ENCODE measurements at regions of chr22 and their contacts with region 1.

Region 1: GRCh38 chr22:35330258-35330861 is 30.7 kb downstream of the TOM1 start:
- H3K4me3 Mint-ChIP-seq: peak overlapping the region; percentile 63
- H3K27ac Mint-ChIP-seq: peak overlapping the region; percentile 97
- H3K4me1 Mint-ChIP-seq: peaks cover 77% of the 10 kb centered on the region
- H3K27me3 Mint-ChIP-seq: no peaks in the 10 kb centered on the region

Region 2: DNA sequence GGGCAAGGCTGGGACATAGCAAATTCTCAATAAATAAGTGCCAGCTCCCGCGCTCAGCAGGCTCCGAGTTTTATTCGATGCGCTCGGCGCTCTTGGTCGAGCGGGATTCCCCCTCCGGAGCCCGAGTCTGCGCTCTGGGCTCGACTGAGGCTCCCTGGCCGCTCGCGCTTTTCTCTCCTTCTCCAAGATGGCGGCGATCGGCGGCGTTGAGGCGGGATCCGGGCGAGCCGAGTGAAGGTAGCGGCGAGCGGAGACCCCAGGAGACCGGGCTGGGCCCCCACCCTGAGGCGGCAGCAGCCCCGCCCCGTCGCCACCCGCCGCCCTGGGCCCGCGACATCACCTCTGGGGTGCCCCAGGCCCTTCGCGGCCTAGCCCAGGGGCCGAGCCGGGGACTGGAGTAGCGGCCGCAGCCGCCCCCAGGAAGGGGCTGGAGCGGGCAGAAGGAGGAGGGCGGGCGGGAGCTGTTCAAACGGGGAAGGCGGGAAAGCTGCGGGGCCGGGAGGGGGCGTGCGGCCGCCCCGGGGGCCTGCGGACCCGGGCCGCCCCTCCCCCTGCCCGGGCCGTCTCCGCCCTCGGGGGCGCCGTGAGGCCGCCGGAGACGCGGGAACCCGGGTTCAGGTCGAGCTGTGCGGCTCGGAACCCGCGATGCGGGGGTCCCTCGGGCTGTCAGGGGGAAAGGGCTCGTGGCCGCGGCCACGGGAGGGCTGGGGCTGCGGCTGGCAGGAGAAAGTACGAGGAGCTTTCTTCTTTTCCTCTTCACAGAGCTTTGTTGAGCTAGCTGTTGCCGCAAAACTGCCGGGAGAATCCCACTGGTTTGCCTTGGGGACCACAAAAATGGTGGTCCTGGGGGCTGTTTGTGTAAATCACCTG is 72.8 kb before region 1 on chr22 and contains the start of gene HMGXB4:
- intact Hi-C with region 1: loop called (anchors 2 kb)
- H3K4me3 Mint-ChIP-seq: peak within 1 kb of the TSS; percentile 80
- H3K27ac Mint-ChIP-seq: peak within 1 kb of the TSS; percentile 76
- H3K4me1 Mint-ChIP-seq: peaks cover 27% of the 10 kb centered on the region
- H3K27me3 Mint-ChIP-seq: no peaks in the 10 kb centered on the region

Region 3: DNA sequence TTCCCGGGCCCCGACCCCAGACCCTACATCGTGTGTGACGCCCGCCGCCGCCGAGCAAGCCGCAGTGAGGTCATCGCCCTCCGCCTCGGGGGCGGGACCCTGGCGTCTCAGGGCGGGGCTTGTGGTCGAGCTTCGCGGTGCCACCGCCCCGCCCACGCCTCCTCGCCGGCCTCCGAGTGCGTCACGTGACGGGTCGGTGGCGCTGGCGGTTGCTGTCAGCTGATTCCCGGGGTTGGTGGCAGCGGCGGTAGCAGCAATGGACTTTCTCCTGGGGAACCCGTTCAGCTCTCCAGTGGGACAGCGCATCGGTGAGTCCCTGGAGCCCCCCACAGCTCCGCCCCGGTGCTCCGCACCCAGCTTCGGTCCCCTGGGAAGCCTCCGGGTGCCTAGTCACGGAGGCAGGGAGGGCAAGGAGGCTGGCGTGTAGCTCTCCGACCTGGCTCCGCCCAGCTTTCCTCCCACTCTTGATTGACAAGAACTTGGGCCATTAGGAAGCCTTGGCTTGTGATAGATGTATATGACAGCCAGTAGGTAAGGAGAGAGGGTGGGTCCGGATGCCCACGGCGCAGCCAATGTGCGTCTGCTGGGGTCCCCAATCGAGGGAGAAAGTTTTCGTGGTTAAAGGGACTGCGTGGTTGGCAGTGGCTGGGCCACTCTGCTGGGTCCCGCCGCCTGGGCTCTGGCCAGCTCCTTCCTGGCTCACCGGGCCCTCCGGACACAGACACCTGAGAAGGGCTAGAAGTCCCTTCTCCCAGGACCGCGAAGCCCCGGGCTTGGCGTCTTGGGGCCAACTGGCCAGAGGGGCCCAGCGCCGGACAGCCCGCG is 30.5 kb before region 1 on chr22 and contains the start of gene TOM1:
- intact Hi-C with region 1: loop called (anchors 2 kb)
- H3K4me3 Mint-ChIP-seq: peak within 1 kb of the TSS; percentile 93
- H3K27ac Mint-ChIP-seq: peak within 1 kb of the TSS; percentile 98
- H3K4me1 Mint-ChIP-seq: peaks cover 49% of the 10 kb centered on the region
- H3K27me3 Mint-ChIP-seq: no peaks in the 10 kb centered on the region

Region 4: DNA sequence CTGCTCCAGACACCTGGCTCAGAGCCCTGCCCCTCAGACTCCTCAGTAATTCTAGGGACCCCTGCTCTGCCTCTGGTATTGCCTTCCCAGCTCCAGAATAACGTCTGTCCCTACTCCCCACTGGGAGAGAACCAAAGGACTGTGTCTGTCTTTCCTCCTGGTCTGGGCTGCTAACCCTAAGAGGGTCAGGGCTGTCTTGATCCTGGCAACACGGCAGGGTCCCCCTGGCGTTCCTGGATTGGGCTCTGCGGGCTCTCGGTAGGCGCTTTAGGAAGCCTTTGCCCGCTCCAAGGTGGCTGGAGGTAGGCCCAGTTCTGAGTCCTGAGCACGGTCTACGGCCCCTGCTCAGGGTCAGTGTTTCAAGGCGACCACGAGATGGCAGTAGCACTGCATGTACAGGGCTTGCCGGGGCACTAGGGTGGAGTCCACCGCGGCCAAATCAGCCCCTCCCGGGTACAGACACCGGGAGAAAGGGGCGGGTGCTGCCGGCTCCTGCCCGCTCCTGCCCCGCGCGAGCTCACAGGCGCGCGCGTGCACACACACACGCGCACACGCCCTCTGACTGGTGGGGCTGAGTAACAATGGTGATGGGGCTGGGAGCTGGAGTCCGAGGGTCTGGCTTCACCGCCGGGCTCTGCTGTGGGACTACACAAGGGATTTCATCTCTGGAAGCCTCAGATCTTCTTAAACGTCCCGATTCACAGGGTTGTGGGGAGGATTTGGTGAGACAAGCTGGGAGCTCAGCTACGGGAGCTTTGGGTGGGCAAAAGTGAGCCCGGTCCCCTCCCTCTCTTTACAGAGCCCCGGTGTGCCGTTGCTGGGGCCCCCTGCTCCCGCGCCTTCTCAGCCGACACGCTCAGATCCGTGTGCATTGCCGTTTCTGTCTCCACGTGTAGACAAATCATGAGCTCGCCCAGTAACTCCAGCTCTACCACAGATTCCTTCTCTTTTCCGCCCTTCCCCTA is 20.5 kb after region 1 on chr22:
- intact Hi-C with region 1: no loop called
- H3K4me3 Mint-ChIP-seq: peak overlapping the region; percentile 84
- H3K27ac Mint-ChIP-seq: peak overlapping the region; percentile 87
- H3K4me1 Mint-ChIP-seq: peaks cover 78% of the 10 kb centered on the region
- H3K27me3 Mint-ChIP-seq: no peaks in the 10 kb centered on the region

Measured in dendritic cell treated with granulocyte-macrophage colony-stimulating factor and Interleukin-4, amounts not matched to agents 40 ng/mL and 50 ng/mL, for 4 days (primary cell).